Activated T-helper 2 cell treated with anti-CD3 and anti-CD28 coated beads, Interferon-gamma antibody, Interleukin-2, Interleukin-4, amounts not matched to agents 10 μg/mL and 5 μg/mL and 100 μg/mL, durations not matched to agents 14 hours and 24 hours and 36 hours (primary cell): ENCODE measurements at regions of chr15 and their contacts with region 1.

Region 1: DNA sequence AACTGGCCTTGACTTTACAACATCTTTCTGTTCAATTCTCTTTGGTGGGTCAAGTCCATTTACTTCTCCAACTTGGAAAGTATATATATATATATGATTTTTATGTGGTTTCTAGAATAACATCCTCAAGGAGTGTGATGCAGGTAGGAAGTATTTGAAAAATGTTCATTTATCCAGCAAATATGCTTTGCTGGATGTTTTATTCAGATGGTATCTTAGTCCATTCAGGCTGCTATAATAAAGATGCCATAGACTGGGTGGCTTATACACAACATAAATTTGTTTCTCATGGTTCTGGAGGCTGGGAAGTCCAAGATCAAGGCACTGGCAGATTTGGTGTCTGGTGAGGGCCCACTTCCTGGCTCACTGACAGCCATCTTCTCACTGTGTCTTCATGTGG is 168.7 kb upstream of the RASGRP1 start:
- DNase-seq: no peak
- H3K4me3 Mint-ChIP-seq: no peak overlapping the region
- H3K27ac Mint-ChIP-seq: no peak overlapping the region
- H3K4me1 Mint-ChIP-seq: peaks cover 1% of the 10 kb centered on the region
- H3K27me3 Mint-ChIP-seq: peaks cover 17% of the 10 kb centered on the region

Region 2: GRCh38 chr15:38398134-38398533 is 335.2 kb before region 1 on chr15:
- intact Hi-C with region 1: no loop called
- DNase-seq: no peak
- H3K4me3 Mint-ChIP-seq: no peak overlapping the region
- H3K27ac Mint-ChIP-seq: no peak overlapping the region
- H3K4me1 Mint-ChIP-seq: no peaks in the 10 kb centered on the region
- H3K27me3 Mint-ChIP-seq: peaks cover 23% of the 10 kb centered on the region

Region 3: DNA sequence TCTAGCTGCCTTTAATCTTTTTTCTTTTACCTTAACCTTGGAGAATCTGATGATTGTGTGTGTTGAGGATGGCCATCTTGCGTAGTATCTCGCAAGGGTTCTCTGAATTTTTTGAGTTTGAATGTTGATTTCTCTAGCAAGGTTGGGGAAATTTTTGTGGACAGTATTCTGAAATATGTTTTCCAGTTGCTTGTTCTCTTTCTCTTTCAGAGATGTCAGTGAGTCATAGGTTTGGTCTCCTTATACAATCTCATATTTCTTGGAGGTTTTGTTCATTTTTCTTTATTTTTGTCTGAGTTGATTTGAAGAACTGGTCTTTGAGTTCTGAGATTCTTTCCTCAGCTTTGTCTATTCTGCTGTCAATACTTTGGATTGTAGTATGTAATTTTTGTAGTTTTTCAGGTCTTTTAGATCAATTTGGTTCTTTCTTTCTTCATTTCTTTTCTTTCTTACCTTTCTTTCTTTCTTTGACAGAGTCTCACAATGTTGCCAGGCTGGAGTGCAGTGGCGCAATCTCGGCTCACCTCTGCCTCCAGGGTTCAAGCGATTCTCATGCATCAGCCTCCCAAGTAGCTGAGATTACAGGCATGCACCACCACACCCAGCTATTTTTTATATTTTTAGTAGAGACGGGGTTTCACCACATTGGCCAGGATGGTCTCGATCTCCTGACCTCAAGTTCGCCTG is 197.7 kb after region 1 on chr15:
- intact Hi-C with region 1: loop called (anchors 10 kb)
- DNase-seq: no peak
- H3K4me3 Mint-ChIP-seq: no peak overlapping the region
- H3K27ac Mint-ChIP-seq: no peak overlapping the region
- H3K4me1 Mint-ChIP-seq: no peaks in the 10 kb centered on the region
- H3K27me3 Mint-ChIP-seq: peaks cover 2% of the 10 kb centered on the region